AG04449 (cell line): ENCODE measurements at regions of chrX and their contacts with region 1.

Region 1: DNA sequence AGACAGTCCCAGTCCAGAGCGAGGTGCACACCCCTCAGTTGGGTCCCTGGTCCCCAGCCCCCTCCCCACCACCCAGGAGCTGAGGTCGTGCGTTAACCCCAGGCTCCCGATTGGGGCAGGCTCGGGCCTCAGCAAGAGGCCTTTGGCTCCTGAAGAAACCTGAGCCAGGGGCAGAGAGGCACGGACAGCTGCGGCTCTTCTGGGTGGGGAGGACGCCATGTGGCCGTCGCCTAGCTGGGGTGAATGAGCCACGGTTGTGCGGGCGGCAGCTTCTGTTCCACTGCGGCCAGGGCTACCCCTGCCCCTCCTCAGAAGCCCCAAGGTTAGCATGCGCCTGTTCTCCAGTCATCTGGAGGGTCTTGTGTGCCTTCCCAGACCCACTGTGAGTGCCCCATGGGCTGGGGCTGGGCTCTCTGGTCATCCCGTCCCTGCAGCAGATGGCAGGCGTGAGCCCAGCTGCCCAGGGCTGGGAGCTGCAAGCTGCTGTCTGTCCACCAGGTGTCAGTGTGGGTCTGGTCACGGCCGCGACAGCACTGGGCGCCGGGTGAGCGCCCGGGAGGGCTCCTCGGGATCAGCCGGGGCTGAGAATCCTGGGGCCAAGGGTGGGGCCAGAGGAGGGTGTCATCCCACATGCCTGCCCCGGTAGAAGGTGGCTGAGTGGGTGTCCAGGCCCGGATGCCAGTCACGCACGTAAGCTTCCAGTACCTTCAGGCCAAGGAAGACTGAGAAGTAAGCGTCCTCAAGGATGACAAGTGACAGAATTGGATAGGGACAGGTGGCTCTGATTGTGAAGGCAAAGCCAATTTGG is 21.9 kb downstream of the ATP2B3 start:
- DNase-seq: no peak
- H3K4me3 ChIP-seq: no peak overlapping the region
- CTCF ChIP-seq: peak; percentile 92

Region 2: DNA sequence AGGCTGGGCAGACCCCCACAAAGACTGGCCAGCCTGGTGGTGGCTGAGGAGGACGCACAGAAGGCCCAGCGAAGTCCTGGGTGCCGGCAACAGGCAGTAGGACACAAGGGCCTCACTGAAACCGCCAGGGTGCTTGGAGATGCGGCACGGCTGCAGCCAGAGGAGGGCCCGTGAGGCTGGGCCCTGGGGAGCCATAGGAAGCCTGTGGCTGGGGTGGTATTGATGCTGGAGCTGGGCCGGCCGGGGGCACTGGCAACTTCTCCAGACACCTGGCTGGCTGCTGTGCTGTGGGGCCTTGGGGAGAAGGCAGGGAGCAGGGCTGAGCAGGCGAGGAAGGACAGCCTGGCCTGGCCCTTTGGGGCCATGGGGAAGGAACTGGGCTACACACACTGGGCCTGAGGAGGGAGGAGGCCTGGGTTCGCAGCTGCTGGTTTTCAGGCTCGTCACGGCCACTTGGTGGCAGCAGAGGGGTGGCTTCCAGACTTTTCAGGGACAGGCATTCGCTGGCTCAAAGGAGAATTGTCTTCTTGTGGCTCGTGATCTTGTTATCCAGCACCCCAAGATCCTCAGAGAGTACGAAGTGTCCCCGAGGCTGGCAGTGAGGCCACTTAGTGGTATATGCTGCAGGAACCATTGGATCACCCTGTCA is 15.3 kb after region 1 on chrX:
- CTCF ChIA-PET with region 1: interaction called, 44 read pairs
- POLR2A ChIA-PET with region 1: no interaction called
- DNase-seq: no peak
- H3K4me3 ChIP-seq: no peak overlapping the region
- CTCF ChIP-seq: peak; percentile 73

Region 3: DNA sequence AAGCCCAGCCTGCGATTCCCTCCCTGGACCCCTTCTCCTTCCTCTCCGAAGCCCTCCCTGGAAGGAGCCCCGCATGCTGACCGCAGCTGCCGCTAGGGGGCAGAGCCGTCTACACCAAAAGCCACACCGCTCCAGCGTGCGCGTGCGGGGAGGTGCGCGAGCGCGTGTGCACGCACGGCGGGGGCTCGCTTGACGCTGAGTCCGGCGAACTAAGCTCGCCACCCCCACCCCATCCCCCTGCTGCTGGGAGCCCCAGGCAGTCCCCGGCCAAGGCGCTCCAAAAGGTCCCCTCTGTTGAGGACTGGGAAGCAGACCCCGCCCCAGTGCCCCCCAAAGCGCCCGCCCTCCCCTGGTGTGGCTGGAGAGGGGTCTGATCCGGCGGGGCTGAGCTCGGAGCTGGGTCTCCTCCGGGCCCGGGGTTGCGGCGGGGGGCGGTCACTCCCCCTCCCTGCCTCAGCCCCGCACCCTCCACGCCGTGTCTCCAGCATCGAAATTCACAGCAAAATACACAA is 70.6 kb after region 1 on chrX:
- CTCF ChIA-PET with region 1: interaction called, 11 read pairs
- POLR2A ChIA-PET with region 1: no interaction called
- DNase-seq: no peak
- H3K4me3 ChIP-seq: peak overlapping the region; percentile 47
- CTCF ChIP-seq: peak; percentile 86

Region 4: GRCh38 chrX:153662266-153662665 is 122.9 kb after region 1 on chrX:
- CTCF ChIA-PET with region 1: interaction called, 107 read pairs
- POLR2A ChIA-PET with region 1: no interaction called
- DNase-seq: no peak
- H3K4me3 ChIP-seq: no peak overlapping the region
- CTCF ChIP-seq: no peak

Region 5: DNA sequence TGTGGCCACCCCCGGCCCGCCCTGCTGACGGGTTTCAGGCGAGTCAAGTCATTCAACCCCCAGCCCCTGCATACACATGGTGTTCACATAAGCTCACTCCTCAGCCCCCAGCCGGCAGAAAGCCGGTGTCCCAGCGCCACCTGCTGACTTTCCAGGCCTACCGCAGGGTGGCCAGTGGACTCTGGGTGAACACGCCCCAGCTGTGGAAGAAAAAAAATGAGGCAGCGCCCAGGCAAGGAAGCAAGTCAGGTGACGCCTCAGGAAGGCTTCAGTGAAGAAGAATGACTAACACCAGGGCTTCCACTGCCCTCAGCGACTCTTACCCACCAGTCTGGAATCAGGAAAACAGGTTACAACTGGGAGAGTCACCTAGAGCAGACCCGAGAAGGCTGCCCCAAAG is 169.0 kb after region 1 on chrX:
- CTCF ChIA-PET with region 1: interaction called, 27 read pairs
- POLR2A ChIA-PET with region 1: no interaction called
- DNase-seq: peak; percentile 16
- H3K4me3 ChIP-seq: no peak overlapping the region
- CTCF ChIP-seq: peak; percentile 60